ENCODE measurements at regions of chr16 and their contacts with region 1.

Region 1: GRCh38 chr16:50065624-50066481 is at the start of gene HEATR3:
- DNase-seq: peak; percentile 89 to 98 (median 95)
- ATAC-seq: peak; percentile 83
- H3K4me3 ChIP-seq: peak within 1 kb of the TSS; percentile 69
- H3K4me3 Mint-ChIP-seq: peak within 1 kb of the TSS; percentile 99
- H3K27ac ChIP-seq: peak within 1 kb of the TSS; percentile 69 to 85
- H3K27ac Mint-ChIP-seq: peak within 1 kb of the TSS; percentile 83
- H3K4me1 ChIP-seq: peaks cover 25% of the 10 kb centered on the region
- H3K4me1 Mint-ChIP-seq: peaks cover 53% of the 10 kb centered on the region
- H3K27me3 ChIP-seq: no peaks in the 10 kb centered on the region
- H3K27me3 Mint-ChIP-seq: no peaks in the 10 kb centered on the region
- CTCF ChIP-seq: no peak
- total RNA-seq, gene HEATR3: 10.1 to 10.6 TPM

Region 2: GRCh38 chr16:49855280-49855821 is 210.5 kb before region 1 on chr16:
- CTCF ChIA-PET with region 1: no interaction called
- POLR2A ChIA-PET with region 1: no interaction called
- intact Hi-C with region 1: loop called in 1 of 2 experiments (anchors 10 kb)
- DNase-seq: peak; percentile 38 to 78 (median 61)
- ATAC-seq: peak; percentile 62
- H3K4me3 ChIP-seq: peak overlapping the region; percentile 24
- H3K4me3 Mint-ChIP-seq: peak overlapping the region; percentile 30
- H3K27ac ChIP-seq: no peak overlapping the region
- H3K27ac Mint-ChIP-seq: no peak overlapping the region
- H3K4me1 ChIP-seq: peaks cover 38% of the 10 kb centered on the region
- H3K4me1 Mint-ChIP-seq: peaks cover 13% of the 10 kb centered on the region
- H3K27me3 ChIP-seq: peaks cover 38 to 56% of the 10 kb centered on the region in 2 experiments
- H3K27me3 Mint-ChIP-seq: peaks cover 53% of the 10 kb centered on the region
- CTCF ChIP-seq: no peak

Measured in CD4-positive, alpha-beta T cell (primary cell).